ENCODE measurements at regions of chr3 and their contacts with region 1.

Region 1: GRCh38 chr3:107704477-107704876 is 181.7 kb downstream of the BBX start:
- DNase-seq: no peak
- ATAC-seq: no peak
- H3K4me3 ChIP-seq: no peak overlapping the region
- H3K27ac ChIP-seq: no peak overlapping the region
- H3K4me1 ChIP-seq: no peaks in the 10 kb centered on the region
- CTCF ChIP-seq: no peak
- EP300 ChIP-seq: no peak
- POLR2A ChIP-seq: no peak
- RAD21 ChIP-seq: no peak

Region 2: GRCh38 chr3:107690522-107691138 is 13.8 kb before region 1 on chr3:
- CTCF ChIA-PET with region 1: interaction called, 10 read pairs
- POLR2A ChIA-PET with region 1: no interaction called
- DNase-seq: peak; percentile 30 to 67
- ATAC-seq: peak; percentile 73 to 83; a peak in 5 of 6 replicates
- H3K4me3 ChIP-seq: no peak overlapping the region
- H3K27ac ChIP-seq: no peak overlapping the region
- H3K4me1 ChIP-seq: peaks cover 14% of the 10 kb centered on the region; the same call in 2 of the 3 replicates
- CTCF ChIP-seq: peak; percentile 60
- EP300 ChIP-seq: no peak
- POLR2A ChIP-seq: no peak
- RAD21 ChIP-seq: peak in 1 of 2 experiments; percentile 34; a peak in 2 of 5 replicates

Measured in A549 (cell line).